Body of pancreas (tissue), 4 donors: ENCODE measurements at regions of chr6 and their contacts with region 1.

Region 1: DNA sequence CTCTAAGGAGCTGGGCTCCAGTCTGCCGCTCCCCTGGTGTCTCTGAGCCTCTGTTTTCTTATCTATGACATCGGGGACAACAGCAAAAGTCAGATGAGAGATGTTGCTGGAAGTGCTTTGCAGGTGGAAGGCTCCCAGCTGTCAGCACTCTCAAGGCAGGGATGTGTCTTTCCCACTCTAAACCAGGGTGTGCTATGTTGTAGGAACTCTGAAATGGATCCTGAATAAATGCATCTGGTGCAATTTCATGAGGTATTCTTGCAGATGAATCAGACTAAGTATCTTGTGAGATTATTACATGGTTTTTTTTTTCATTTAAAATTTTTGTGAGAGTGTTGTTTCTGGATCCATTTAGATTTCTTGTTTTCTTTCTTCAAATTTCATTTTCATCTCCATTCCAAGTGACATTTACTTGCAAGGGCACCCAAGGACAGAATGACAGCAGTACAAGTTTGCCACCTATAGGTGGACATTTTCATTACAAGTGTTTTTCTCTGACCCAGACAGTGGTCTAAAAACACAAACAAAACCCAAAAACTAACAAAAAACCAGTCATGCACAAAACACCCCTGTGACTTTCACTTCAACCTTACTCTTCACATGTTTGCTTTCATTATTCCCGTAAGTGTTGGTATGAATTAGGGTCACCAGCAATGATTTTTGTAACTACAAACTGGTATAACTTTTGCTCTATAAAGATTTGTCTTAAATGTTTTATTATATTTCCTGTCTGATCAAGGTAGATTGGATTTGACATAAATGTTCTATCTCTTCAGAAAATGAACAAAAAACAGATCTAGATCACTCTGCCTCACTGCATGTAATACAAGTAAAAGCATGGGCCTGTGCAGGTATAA is 14.7 kb upstream of the SIM1 start:
- DNase-seq: no peak
- ATAC-seq: peak; percentile 64
- H3K4me3 ChIP-seq: no peak overlapping the region
- H3K27ac ChIP-seq: no peak overlapping the region
- H3K4me1 ChIP-seq: peaks cover 6% of the 10 kb centered on the region
- H3K27me3 ChIP-seq: no peaks in the 10 kb centered on the region
- CTCF ChIP-seq: peak; percentile 48 to 85 (median 77)
- POLR2A ChIP-seq: no peak

Region 2: DNA sequence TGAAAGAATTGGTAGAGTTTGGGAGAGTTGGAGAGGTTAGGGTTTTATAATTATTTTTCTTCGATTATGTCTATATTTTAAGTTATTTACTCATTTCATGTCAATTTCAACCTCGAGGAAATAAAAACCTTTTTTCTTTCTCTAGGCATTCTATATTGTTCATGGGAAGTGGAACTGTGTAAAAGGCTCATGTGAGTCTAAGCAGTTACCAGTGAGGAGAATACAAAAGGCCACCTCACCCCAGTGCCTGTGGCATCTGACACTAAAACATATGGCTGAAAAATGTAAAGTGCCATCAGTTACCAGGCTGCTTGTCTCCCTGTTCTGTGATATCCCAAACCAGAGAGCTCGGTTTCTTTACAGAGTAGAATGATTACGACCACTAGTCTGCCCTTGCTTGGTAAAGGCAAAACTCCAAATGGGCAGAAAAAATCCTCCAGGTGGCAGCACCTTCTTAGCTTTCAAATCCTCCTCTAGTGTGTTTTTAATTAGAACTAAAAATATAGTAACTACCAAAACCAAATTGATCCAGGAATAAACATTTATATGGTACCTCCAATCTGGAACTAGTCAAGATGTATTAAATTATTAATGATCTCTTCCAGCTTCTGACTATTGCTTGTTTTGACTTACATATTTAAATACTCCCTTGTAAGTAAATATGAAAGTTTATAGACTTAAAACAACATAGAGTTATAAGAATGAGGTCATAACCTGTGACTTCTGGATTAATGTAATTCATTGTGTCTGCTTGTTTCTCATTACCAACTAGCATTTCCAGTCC is 362.8 kb before region 1 on chr6:
- intact Hi-C with region 1: loop called (anchors 5 kb)
- DNase-seq: peak; percentile 33 to 59 (median 56)
- ATAC-seq: no peak
- H3K4me3 ChIP-seq: no peak overlapping the region
- H3K27ac ChIP-seq: no peak overlapping the region
- H3K4me1 ChIP-seq: no peaks in the 10 kb centered on the region
- H3K27me3 ChIP-seq: no peaks in the 10 kb centered on the region
- CTCF ChIP-seq: peak; percentile 54 to 76 (median 70)
- POLR2A ChIP-seq: no peak